H1 (cell line): ENCODE measurements at regions of chr1 and their contacts with region 1.

Region 1: GRCh38 chr1:45011837-45012638 is at the start of gene UROD:
- DNase-seq: peak; percentile 91 to 94
- H3K4me3 ChIP-seq: peak within 1 kb of the TSS; percentile 64 to 89 (median 79)
- H3K27ac ChIP-seq: peak within 1 kb of the TSS; percentile 16; the same call in 1 of the 2 replicates
- H3K4me1 ChIP-seq: peaks cover 5 to 10% (median 6%) of the 10 kb centered on the region in 4 experiments; a peak in 6 of 7 replicates
- H3K27me3 ChIP-seq: no peaks in the 10 kb centered on the region
- CTCF ChIP-seq: no peak
- EP300 ChIP-seq: peak in 1 of 2 experiments; percentile 71; a peak in 1 of 3 replicates
- POLR2A ChIP-seq: peak in 1 of 2 experiments; percentile 86; a peak in 2 of 3 replicates
- RAD21 ChIP-seq: no peak; a peak in 1 of 4 replicates
- total RNA-seq, gene UROD: 86.6 TPM in 2 replicates

Region 2: DNA sequence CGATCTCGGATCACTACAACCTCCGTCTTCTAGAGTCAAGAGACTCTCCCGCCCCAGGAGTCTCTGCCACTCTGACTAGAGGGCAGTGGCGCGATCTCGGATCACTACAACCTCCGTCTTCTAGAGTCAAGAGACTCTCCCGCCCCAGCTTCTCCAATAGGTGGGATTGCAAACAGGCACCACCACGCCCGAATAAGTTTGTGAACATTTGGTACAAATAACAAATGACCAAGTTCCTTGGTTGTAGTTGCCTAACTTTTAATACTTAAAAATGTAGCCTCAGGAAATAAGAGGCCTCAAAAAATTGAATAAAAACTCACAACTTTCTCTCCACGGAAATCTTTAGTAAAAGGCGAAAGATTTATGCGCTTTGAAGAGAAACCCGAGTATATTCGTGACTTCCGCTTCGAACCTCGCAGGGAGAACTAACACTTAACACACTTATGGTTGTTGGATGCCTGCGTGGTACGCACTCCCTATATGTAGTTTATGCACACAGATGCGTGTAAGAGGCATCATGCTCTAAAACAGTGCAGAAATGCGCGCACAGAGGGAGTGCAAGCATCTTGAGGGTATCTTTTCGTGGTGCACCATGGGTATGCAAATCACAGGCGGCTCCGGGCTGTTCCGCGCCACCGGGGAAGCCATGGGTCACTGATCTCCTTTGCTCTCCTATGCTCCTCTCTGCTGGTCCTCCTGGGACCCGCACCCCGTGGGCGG is 192.3 kb before region 1 on chr1:
- CTCF ChIA-PET with region 1: interaction called, 11 read pairs
- POLR2A ChIA-PET with region 1: interaction called, 26 read pairs
- DNase-seq: peak; percentile 79 to 91
- H3K4me3 ChIP-seq: peak overlapping the region; percentile 40 to 64 (median 47)
- H3K27ac ChIP-seq: peak overlapping the region; percentile 100
- H3K4me1 ChIP-seq: peaks cover 2 to 5% (median 3%) of the 10 kb centered on the region in 4 experiments; a peak in 5 of 7 replicates
- H3K27me3 ChIP-seq: no peaks in the 10 kb centered on the region; a peak in 2 of 7 replicates
- CTCF ChIP-seq: 0 out of 4 replicates have a peak, but pooled peaks of 1 of the 3 experiments have one; percentile 5
- EP300 ChIP-seq: peak in 1 of 2 experiments; percentile 79; a peak in 1 of 3 replicates
- POLR2A ChIP-seq: peak; percentile 99 to 100
- RAD21 ChIP-seq: peak in 1 of 2 experiments; percentile 15; a peak in 3 of 4 replicates

Region 3: GRCh38 chr1:44835738-44836675 is 176.0 kb before region 1 on chr1:
- CTCF ChIA-PET with region 1: interaction called, 36 read pairs
- POLR2A ChIA-PET with region 1: no interaction called
- DNase-seq: peak; percentile 69 to 95
- H3K4me3 ChIP-seq: no peak overlapping the region
- H3K27ac ChIP-seq: no peak overlapping the region
- H3K4me1 ChIP-seq: peaks cover 0 to 4% (median 1%) of the 10 kb centered on the region in 4 experiments; a peak in 4 of 7 replicates
- H3K27me3 ChIP-seq: no peaks in the 10 kb centered on the region
- CTCF ChIP-seq: peak; percentile 82 to 97 (median 94)
- EP300 ChIP-seq: no peak
- POLR2A ChIP-seq: no peak
- RAD21 ChIP-seq: peak; percentile 89 to 92

Region 4: DNA sequence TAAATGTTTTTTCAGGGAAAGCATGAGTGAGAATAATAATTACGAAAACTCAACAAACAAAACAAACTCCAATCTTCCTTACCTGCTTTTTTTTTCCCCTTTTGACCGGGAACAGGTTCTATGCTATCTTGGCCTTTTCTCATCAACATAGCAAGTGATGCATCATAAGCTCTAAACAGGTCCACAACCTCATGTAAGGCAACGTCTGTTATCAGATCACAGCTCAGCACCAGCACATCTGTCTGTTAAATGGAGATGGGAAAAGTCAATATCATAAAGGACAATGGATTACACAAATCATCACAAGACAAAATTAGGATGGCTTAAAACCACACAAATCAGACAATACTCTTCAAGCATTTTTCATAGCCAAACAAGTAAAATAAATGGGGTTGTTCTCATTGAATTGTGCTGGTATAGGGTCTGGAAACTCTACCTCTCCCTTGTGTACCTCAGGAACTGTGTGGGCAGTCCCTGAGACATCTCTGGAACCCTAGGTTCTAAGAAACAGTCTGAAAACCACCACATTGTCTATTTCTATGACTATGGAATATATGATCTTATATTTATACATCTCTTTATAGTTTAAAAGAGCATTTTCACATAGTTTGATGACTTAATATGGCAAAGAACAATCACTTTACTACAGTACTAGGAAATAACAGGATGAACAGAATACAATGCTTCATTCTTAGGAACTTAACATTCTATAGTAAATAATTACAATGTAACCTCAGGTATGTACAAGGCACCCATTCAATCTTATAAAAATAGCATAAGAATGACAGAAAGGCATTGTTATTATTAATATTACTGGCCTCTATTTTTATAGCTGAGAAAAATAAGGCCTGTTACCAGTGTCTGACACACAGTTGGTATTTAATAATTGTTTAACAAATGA is 70.4 kb before region 1 on chr1:
- CTCF ChIA-PET with region 1: no interaction called
- POLR2A ChIA-PET with region 1: no interaction called
- DNase-seq: no peak
- H3K4me3 ChIP-seq: no peak overlapping the region
- H3K27ac ChIP-seq: no peak overlapping the region
- H3K4me1 ChIP-seq: no peaks in the 10 kb centered on the region
- H3K27me3 ChIP-seq: no peaks in the 10 kb centered on the region
- CTCF ChIP-seq: no peak
- EP300 ChIP-seq: no peak
- POLR2A ChIP-seq: no peak
- RAD21 ChIP-seq: no peak

Region 5: GRCh38 chr1:45033356-45033755 is 21.3 kb after region 1 on chr1:
- CTCF ChIA-PET with region 1: interaction called, 36 read pairs
- POLR2A ChIA-PET with region 1: interaction called, 4 read pairs
- DNase-seq: no peak
- H3K4me3 ChIP-seq: no peak overlapping the region
- H3K27ac ChIP-seq: no peak overlapping the region
- H3K4me1 ChIP-seq: no peaks in the 10 kb centered on the region
- H3K27me3 ChIP-seq: no peaks in the 10 kb centered on the region
- CTCF ChIP-seq: no peak
- EP300 ChIP-seq: no peak
- POLR2A ChIP-seq: no peak
- RAD21 ChIP-seq: no peak

Region 6: GRCh38 chr1:45097944-45098343 is 85.9 kb after region 1 on chr1:
- CTCF ChIA-PET with region 1: no interaction called
- POLR2A ChIA-PET with region 1: no interaction called
- DNase-seq: no peak
- H3K4me3 ChIP-seq: no peak overlapping the region
- H3K27ac ChIP-seq: no peak overlapping the region
- H3K4me1 ChIP-seq: no peaks in the 10 kb centered on the region
- H3K27me3 ChIP-seq: no peaks in the 10 kb centered on the region
- CTCF ChIP-seq: no peak
- EP300 ChIP-seq: no peak
- POLR2A ChIP-seq: no peak
- RAD21 ChIP-seq: no peak

Region 7: GRCh38 chr1:45155423-45155822 is 143.4 kb after region 1 on chr1:
- CTCF ChIA-PET with region 1: no interaction called
- POLR2A ChIA-PET with region 1: no interaction called
- DNase-seq: no peak
- H3K4me3 ChIP-seq: no peak overlapping the region
- H3K27ac ChIP-seq: no peak overlapping the region
- H3K4me1 ChIP-seq: no peaks in the 10 kb centered on the region
- H3K27me3 ChIP-seq: no peaks in the 10 kb centered on the region
- CTCF ChIP-seq: no peak
- EP300 ChIP-seq: no peak
- POLR2A ChIP-seq: no peak
- RAD21 ChIP-seq: no peak

Region 8: GRCh38 chr1:45230540-45230939 is 218.5 kb after region 1 on chr1:
- CTCF ChIA-PET with region 1: interaction called, 11 read pairs
- POLR2A ChIA-PET with region 1: no interaction called
- DNase-seq: no peak
- H3K4me3 ChIP-seq: no peak overlapping the region
- H3K27ac ChIP-seq: no peak overlapping the region
- H3K4me1 ChIP-seq: no peaks in the 10 kb centered on the region
- H3K27me3 ChIP-seq: no peaks in the 10 kb centered on the region
- CTCF ChIP-seq: peak; percentile 34 to 45 (median 41)
- EP300 ChIP-seq: no peak
- POLR2A ChIP-seq: no peak
- RAD21 ChIP-seq: peak; percentile 75 to 78

Region 9: GRCh38 chr1:45258059-45258650 is 246.1 kb after region 1 on chr1:
- CTCF ChIA-PET with region 1: no interaction called
- POLR2A ChIA-PET with region 1: no interaction called
- DNase-seq: no peak
- H3K4me3 ChIP-seq: no peak overlapping the region
- H3K27ac ChIP-seq: no peak overlapping the region
- H3K4me1 ChIP-seq: no peaks in the 10 kb centered on the region
- H3K27me3 ChIP-seq: 0 out of 7 replicates have a peak, but pooled peaks cover 0 to 2% (median 0%) of the 10 kb centered on the region in 4 experiments
- CTCF ChIP-seq: no peak
- EP300 ChIP-seq: no peak
- POLR2A ChIP-seq: no peak
- RAD21 ChIP-seq: no peak

Region 10: GRCh38 chr1:45326627-45327623 is 314.9 kb after region 1 on chr1 and contains the start of gene HPDL:
- CTCF ChIA-PET with region 1: interaction called, 11 read pairs
- POLR2A ChIA-PET with region 1: interaction called, 31 read pairs
- DNase-seq: peak; percentile 64 to 85
- H3K4me3 ChIP-seq: peak within 1 kb of the TSS; percentile 61 to 69 (median 64)
- H3K27ac ChIP-seq: peak within 1 kb of the TSS; percentile 65; the same call in 1 of the 2 replicates
- H3K4me1 ChIP-seq: peaks cover 8 to 24% (median 14%) of the 10 kb centered on the region in 4 experiments; a peak in 6 of 7 replicates
- H3K27me3 ChIP-seq: no peaks in the 10 kb centered on the region
- CTCF ChIP-seq: no peak
- EP300 ChIP-seq: peak in 1 of 2 experiments; percentile 15; a peak in 1 of 3 replicates
- POLR2A ChIP-seq: peak; percentile 77 to 100
- RAD21 ChIP-seq: peak; percentile 14 to 23; a peak in 1 of 4 replicates
- total RNA-seq, gene HPDL: 58.5 and 60.6 TPM in 2 replicates

Region 11: DNA sequence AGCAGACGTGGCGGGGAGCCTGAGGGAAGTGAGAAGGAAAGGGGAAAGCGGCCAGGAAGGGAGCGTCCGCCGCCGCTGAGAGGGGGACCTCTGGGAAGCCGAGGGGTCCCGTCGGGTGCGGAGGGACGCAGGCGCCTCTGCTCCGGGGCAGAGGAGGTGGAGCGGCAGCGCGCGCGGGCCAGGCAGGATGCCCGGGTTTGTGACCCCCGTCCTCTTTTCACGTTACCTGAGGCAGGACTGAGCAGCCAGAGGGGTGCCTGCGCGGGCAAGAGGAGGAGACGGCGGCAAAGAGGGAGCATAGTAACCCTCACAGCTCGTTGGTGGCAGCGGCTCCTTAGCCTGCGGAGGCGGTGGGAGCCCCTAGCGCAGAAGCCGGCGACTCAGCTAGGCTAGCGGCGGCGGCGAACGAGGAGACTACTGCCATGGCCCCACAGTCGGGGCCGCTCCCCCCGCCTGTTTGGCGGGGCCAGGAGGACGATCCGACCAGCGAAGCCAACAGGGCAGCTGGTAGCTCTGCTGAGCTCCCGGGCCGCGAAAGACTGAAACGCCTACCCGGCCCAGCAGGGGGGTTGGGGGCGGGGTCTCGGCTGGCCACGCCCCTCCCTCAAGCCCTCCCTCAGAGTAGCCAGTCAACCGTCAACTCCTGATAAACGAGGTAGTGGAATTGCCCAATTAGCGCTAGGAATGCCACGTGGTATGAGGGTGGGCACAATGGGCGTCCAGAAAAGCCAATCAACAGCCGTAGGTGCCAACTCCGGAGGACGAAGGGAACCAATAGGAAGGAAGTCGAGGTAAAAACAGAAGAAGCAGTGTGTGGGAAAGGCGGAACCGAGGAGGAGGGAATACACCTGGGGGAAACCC is 478.8 kb after region 1 on chr1 and contains the start of gene TESK2:
- CTCF ChIA-PET with region 1: interaction called, 17 read pairs
- POLR2A ChIA-PET with region 1: interaction called, 3 read pairs
- DNase-seq: peak; percentile 99 to 100
- H3K4me3 ChIP-seq: peak within 1 kb of the TSS; percentile 77 to 89 (median 83)
- H3K27ac ChIP-seq: no peak within 1 kb of the TSS; the same call in 1 of the 2 replicates
- H3K4me1 ChIP-seq: peaks cover 0 to 8% (median 3%) of the 10 kb centered on the region in 4 experiments; a peak in 6 of 7 replicates
- H3K27me3 ChIP-seq: no peaks in the 10 kb centered on the region
- CTCF ChIP-seq: no peak
- EP300 ChIP-seq: no peak; a peak in 1 of 3 replicates
- POLR2A ChIP-seq: peak in 1 of 2 experiments; percentile 85; a peak in 2 of 3 replicates
- RAD21 ChIP-seq: 0 out of 4 replicates have a peak, but pooled peaks of 1 of the 2 experiments have one; percentile 0
- total RNA-seq, gene TESK2: 10.9 and 12.6 TPM in 2 replicates